PC-9 (cell line): ENCODE measurements at regions of chr9 and their contacts with region 1.

Region 1: DNA sequence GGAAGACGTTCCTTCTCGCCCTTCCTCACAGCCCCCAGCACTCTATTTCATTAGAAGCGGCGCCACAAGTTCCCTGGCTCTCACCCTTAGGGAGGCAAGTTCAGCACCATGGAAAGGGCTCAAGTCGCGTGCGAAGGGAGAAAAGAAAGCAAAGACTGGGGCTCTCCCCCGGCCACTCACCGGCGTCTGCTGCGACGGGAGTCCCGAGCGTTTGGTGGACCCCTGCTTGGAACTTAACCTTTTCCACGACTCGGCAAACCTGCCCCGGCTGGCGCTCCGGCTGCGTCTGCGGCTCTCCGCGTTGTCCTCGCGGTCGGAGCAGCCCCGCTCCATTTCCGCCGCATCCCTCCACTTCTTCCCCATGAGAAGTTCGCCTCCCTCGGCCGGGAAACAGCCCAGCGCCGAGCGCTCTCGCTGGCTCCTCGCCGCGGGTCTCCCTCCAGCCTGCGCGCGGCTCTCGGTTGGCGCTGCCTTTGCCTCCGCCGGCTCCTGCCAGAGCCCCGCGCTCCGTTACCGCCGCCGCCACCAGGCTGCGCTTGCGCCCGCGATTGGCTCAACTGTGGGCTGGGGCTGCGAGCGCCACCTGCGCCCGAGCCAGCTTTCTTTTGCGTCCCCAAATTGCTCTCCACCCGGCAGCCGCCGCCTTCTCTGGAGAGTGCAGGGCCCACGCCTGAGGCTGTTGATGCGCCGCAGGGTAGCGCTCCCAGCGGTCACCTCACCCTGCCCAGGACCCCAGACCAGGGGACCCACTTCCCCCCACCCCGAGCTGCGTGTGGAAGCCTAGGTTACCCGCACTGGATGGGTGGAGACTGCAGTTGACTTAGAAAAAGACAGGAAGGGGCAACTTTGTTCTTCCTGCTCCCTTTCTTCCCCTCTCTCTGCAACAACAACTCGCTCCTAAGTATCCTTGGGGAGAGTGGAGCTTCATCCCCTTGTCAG is 321.6 kb downstream of the CEMIP2 start:
- DNase-seq: peak in 1 of 2 experiments; percentile 11
- H3K4me3 ChIP-seq: no peak overlapping the region
- H3K27ac ChIP-seq: no peak overlapping the region
- H3K4me1 ChIP-seq: no peaks in the 10 kb centered on the region
- H3K27me3 ChIP-seq: no peaks in the 10 kb centered on the region
- CTCF ChIP-seq: no peak

Region 2: DNA sequence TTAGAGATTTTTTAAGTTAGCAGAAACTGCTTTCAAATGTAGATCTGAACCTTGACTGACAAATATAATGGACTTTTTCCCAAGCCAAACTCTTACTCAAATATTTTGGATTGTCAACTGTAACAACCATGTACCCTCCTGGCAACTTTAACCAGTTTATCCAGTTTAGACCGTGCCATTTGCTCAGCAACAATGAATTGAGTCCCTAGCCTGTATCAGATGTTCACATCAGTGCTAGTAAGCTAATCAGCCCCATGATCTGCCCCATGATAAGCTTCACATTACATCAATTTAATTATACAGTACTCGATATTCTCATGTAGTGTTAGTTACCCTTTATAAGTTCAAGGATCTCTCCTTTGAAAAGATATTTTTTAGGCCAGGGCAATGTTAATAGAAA is 48.9 kb before region 1 on chr9:
- CTCF ChIA-PET with region 1: no interaction called
- POLR2A ChIA-PET with region 1: no interaction called
- intact Hi-C with region 1: loop called (anchors 2 kb)
- DNase-seq: no peak
- H3K4me3 ChIP-seq: no peak overlapping the region
- H3K27ac ChIP-seq: no peak overlapping the region
- H3K4me1 ChIP-seq: no peaks in the 10 kb centered on the region
- H3K27me3 ChIP-seq: no peaks in the 10 kb centered on the region
- CTCF ChIP-seq: no peak

Region 3: DNA sequence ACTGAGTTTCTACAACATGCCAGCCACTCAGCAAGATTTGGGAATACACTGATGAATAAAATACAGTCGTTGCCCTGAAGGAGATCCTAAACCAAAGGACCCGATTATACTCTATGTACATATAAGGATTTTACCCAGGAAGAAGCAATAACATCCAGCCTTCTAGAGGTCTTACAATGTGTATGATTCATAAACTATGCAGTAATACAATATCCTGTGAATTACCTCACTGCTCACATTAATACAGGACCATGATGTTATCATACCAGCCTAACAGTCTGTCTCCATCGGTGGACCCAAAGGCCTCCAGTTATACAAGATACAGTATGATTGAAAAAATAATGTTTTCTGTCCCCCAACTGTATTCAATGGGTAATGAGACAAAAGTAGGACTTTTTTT is 14.8 kb before region 1 on chr9:
- CTCF ChIA-PET with region 1: no interaction called
- POLR2A ChIA-PET with region 1: no interaction called
- intact Hi-C with region 1: no loop called
- DNase-seq: no peak
- H3K4me3 ChIP-seq: no peak overlapping the region
- H3K27ac ChIP-seq: no peak overlapping the region
- H3K4me1 ChIP-seq: no peaks in the 10 kb centered on the region
- H3K27me3 ChIP-seq: no peaks in the 10 kb centered on the region
- CTCF ChIP-seq: no peak

Region 4: DNA sequence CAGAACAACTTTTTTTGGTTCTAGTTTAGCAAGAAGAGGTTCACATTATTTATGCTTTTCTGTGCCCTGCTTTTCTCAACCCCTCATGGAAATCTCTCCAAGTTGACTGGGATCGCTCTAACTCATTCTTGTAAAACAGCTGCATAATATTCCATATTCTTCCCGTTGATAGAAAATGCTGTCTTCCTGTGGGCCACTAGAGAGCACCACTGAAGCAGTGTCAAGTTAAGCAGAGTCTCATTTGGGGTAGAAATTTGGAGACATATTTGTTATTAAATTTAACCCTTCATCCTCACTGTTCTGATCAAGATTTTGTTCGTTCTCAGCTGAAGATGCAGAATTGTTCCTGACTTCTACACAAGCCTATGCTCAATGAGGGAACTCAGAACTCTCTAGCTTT is 181.5 kb after region 1 on chr9:
- CTCF ChIA-PET with region 1: interaction called, 11 read pairs
- POLR2A ChIA-PET with region 1: no interaction called
- intact Hi-C with region 1: no loop called
- DNase-seq: no peak
- H3K4me3 ChIP-seq: no peak overlapping the region
- H3K27ac ChIP-seq: no peak overlapping the region
- H3K4me1 ChIP-seq: peaks cover 7% of the 10 kb centered on the region; the same call in 1 of the 2 replicates
- H3K27me3 ChIP-seq: no peaks in the 10 kb centered on the region
- CTCF ChIP-seq: peak; percentile 49; the same call in 1 of the 2 replicates